ENCODE measurements at regions of chr12 and their contacts with region 1.

Region 1: DNA sequence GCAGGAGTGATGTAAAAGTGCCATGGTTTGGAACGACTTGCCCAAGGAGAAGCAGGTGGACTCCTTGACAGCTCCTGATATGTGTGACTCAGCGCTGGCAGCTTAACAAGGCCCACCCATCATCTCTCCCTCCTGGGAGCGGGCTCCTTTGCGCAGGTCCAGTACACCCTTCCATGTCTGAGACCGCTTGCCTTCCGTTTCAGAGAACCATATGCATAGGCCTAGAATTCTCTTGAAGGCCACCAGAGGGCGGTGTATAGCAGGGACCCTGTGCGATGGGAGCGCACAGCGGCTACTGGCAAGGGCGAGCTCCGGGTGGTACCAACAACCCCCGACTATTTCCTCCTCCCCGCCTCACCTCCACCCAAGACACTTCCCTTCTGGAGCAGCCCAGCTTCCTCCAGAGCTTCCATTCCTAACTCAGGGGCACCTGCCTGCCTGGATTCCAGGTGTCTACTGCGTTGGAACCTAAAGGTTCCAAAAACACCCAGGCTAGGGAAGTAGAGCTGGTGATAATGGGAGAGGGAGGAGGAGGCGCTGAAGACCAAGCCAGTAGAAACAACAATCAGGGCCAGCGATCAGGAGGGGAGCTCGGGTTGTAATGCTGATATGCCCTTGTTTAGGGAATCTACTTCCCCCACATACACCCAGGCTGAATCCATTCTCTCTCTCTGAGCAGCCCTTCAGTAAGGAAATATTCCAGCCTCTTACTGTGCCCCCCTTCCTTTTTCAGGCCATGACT is 6.2 kb downstream of the DHH start:
- DNase-seq: peak; percentile 90 to 92
- H3K4me3 ChIP-seq: peak overlapping the region; percentile 37; the same call in 1 of the 2 replicates
- H3K27ac ChIP-seq: no peak overlapping the region
- H3K4me1 ChIP-seq: peaks cover 25% of the 10 kb centered on the region
- H3K27me3 ChIP-seq: peaks cover 10% of the 10 kb centered on the region
- CTCF ChIP-seq: peak; percentile 86

Region 2: DNA sequence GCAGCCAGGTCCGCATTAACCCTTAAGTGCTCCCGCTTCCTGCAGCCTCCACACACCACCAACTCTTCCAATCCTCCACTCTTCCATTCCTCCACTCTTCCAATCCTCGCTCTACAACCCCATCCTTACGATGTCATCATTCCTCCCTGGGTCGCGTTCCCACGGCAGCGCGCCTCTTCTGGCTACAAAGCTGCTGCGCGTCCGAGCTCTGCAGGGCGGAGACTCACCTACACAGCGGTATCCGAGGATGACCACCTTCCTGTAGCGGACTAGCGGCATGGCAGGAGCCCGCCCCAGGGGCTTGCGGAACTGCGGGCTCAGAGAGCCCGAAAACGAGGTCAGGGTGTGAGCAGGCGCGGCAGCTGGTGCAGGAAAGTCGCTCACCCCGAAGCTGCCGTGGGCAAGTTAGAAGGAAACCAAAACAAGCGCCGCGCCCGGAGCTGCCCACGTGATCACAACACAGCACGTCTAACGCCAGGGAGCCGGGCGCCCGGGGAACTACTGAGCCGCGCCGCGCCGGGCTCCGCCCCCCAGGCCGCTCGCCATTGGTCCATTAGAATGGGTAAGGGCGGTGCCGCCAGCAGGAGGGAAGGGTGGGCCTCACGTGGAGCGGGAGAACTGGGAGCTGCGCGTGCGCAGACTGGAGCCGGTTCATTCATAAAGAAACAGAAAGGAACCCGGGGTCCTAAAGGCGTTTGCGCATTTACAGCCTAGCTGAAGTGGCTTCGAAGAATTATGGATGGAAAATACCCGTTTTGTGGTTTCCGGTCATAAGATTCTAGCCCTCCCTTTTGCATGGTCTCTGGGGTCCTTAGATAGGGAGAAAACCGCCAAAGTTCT is 18.6 kb before region 1 on chr12 and contains the start of gene RHEBL1:
- CTCF ChIA-PET with region 1: interaction called, 15 read pairs
- POLR2A ChIA-PET with region 1: interaction called, 10 read pairs
- intact Hi-C with region 1: loop called (anchors 1 kb)
- DNase-seq: peak; percentile 88 to 98
- H3K4me3 ChIP-seq: peak within 1 kb of the TSS; percentile 95
- H3K27ac ChIP-seq: peak within 1 kb of the TSS; percentile 39; the same call in 1 of the 2 replicates
- H3K4me1 ChIP-seq: peaks cover 8% of the 10 kb centered on the region; the same call in 1 of the 2 replicates
- H3K27me3 ChIP-seq: no peaks in the 10 kb centered on the region
- CTCF ChIP-seq: no peak; the same call in 1 of the 2 replicates
- total RNA-seq, gene RHEBL1: 2.9 and 3.4 TPM in 2 replicates

Region 3: GRCh38 chr12:49110464-49111155 is 22.2 kb after region 1 on chr12 and contains the start of gene LMBR1L:
- CTCF ChIA-PET with region 1: interaction called, 22 read pairs
- POLR2A ChIA-PET with region 1: no interaction called
- intact Hi-C with region 1: no loop called
- DNase-seq: peak; percentile 95 to 96
- H3K4me3 ChIP-seq: peak within 1 kb of the TSS; percentile 92
- H3K27ac ChIP-seq: peak within 1 kb of the TSS; percentile 69
- H3K4me1 ChIP-seq: peaks cover 33% of the 10 kb centered on the region
- H3K27me3 ChIP-seq: no peaks in the 10 kb centered on the region
- CTCF ChIP-seq: no peak; the same call in 1 of the 2 replicates
- total RNA-seq, gene LMBR1L: 53.9 and 63.3 TPM in 2 replicates

Region 4: GRCh38 chr12:49130151-49131050 is 42.0 kb after region 1 on chr12:
- CTCF ChIA-PET with region 1: interaction called, 23 read pairs
- POLR2A ChIA-PET with region 1: interaction called, 7 read pairs
- intact Hi-C with region 1: no loop called
- DNase-seq: peak; percentile 83 to 89
- H3K4me3 ChIP-seq: peak overlapping the region; percentile 84
- H3K27ac ChIP-seq: peak overlapping the region; percentile 94
- H3K4me1 ChIP-seq: peaks cover 26% of the 10 kb centered on the region
- H3K27me3 ChIP-seq: no peaks in the 10 kb centered on the region
- CTCF ChIP-seq: peak; percentile 82

Region 5: DNA sequence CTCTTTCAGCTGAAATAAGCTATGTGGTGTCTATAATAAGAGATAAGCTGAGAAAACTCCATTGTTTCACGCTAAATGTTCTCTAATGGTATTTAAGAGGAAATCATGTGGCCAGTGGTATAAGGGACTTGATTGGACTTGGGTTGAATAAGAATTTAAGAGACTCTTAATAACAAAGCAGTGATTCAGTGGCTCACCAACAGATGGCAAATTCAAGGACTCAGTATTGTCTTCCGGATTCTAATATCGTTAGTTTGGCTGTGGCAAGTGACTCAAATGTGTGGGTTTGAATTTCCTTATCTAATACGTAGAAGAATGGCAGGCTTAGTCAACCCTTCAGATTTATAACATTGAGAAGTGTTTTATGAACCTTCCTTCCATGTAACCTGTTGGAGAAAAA is 401.4 kb after region 1 on chr12:
- CTCF ChIA-PET with region 1: no interaction called
- POLR2A ChIA-PET with region 1: interaction called, 11 read pairs
- intact Hi-C with region 1: no loop called
- DNase-seq: no peak
- H3K4me3 ChIP-seq: no peak overlapping the region
- H3K27ac ChIP-seq: no peak overlapping the region
- H3K4me1 ChIP-seq: no peaks in the 10 kb centered on the region
- H3K27me3 ChIP-seq: no peaks in the 10 kb centered on the region
- CTCF ChIP-seq: no peak

Measured in PC-9 (cell line).